ENCODE measurements at regions of chr17 and their contacts with region 1.

Region 1: GRCh38 chr17:76529224-76530094 is 8.1 kb downstream of the CYGB start:
- DNase-seq: peak; percentile 73 to 91
- H3K4me3 ChIP-seq: peak overlapping the region; percentile 27 to 39
- H3K27ac ChIP-seq: peak overlapping the region; percentile 93 to 95
- H3K4me1 ChIP-seq: peaks cover 22 to 36% of the 10 kb centered on the region in 2 donors
- H3K27me3 ChIP-seq: no peaks in the 10 kb centered on the region
- CTCF ChIP-seq: no peak

Region 2: DNA sequence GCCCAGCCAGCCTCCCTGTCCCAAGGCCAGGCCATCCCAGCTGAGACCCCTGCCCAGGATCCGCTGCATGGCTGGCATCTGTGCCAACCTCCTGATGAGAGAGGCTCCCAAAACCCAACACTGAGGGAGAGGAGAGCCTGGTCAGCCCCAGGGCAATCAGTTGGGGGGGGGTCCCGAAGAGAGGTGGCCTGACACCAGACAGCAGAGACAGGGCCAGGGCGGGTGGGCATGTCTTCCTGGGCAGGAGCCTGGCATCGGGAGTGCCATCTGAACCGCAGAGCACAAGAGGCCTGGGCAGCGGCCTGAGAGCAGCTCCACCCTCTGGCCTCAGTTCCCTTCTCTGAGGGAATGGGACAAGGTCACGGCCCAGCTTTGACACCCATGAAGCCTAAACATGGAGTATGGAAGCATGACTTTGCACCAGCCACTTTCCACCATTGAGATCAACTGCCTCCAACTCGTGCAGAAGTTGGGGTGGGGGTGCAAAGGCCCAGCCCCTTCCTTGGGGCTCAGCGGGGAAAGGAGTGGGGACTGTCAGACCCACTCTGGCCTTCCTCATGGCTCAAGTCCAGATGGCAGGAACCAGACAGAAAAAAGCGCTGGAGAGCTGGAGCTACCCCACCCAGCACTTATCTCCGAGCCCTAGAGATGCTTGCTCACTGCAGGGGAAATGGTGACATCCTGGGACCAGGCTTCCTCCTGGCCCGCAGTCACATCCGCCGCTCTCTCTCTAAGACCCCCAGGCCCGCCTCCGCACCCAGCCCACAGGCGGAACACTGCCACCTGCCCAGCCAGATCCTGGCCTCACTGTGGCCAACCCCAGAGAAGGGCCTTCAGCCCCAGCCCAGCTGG is 38.0 kb before region 1 on chr17:
- intact Hi-C with region 1: no loop called
- DNase-seq: no peak
- H3K4me3 ChIP-seq: no peak overlapping the region
- H3K27ac ChIP-seq: peak overlapping the region; percentile 70 to 77
- H3K4me1 ChIP-seq: no peaks in the 10 kb centered on the region
- H3K27me3 ChIP-seq: no peaks in the 10 kb centered on the region
- CTCF ChIP-seq: no peak

Region 3: GRCh38 chr17:76540381-76541300 is 11.2 kb after region 1 on chr17:
- intact Hi-C with region 1: loop called (anchors 1 kb)
- DNase-seq: peak; percentile 86 to 95
- H3K4me3 ChIP-seq: peak overlapping the region; percentile 49 to 59
- H3K27ac ChIP-seq: no peak overlapping the region
- H3K4me1 ChIP-seq: peaks cover 14% of the 10 kb centered on the region in 2 donors
- H3K27me3 ChIP-seq: peaks cover 12% of the 10 kb centered on the region
- CTCF ChIP-seq: peak in 1 of 3 experiments; percentile 10

Measured in ascending aorta (tissue), 2 donors.